ENCODE measurements at regions of chr14 and their contacts with region 1.

Region 1: DNA sequence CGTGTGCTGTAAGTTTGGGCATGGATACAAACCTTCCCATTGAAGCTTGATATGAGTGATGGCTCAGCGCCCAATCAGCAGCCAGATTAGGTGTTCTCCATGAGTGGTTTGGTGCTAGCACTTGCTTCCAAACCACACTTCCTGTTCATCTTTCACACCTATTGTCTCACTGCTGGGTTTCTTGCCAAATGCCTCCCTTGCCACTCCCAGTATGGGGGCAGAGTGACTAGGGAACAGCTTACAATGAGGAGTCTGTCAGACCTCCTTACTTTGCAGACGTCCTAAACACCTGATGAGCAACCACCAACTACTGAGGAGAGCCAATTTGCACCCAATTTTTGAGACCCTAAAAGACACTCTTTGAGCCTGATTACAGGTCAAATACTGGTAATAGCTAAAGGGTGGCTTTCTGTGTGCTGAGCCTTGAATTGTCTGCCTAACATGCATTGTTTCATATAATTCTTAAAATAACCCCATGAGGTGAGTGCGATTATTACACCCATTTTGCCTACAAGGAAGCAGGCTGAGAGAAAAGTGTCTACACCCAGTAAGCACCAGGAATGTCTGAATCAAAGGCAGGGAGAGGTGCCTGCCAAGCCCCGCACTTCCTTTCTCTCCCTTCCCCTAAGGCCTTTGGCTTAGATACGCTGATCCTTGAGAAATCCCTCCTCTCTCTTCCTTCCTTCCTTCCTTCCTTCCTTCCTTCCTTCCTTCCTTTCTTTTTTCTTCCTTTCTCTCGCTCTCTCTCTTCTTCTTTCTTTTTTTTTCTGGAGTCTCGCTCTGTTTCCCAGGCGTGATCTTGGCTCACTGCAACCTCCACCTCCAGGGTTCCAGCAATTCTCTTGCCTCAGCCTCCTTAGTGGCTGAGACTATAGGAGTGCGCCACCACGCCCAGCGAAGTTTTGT is 48.2 kb upstream of the FOS start:
- DNase-seq: peak; percentile 69
- H3K4me3 ChIP-seq: no peak overlapping the region
- H3K27ac ChIP-seq: peak overlapping the region; percentile 75 to 83 (median 79)
- H3K4me1 ChIP-seq: peaks cover 13 to 53% (median 18%) of the 10 kb centered on the region in 4 donors
- H3K27me3 ChIP-seq: no peaks in the 10 kb centered on the region
- CTCF ChIP-seq: peak; percentile 22 to 90 (median 41)
- EP300 ChIP-seq: no peak
- POLR2A ChIP-seq: peak; percentile 56

Region 2: GRCh38 chr14:75182841-75183624 is 47.4 kb before region 1 on chr14:
- in situ Hi-C with region 1: no loop called
- intact Hi-C with region 1: loop called (anchors 10 kb)
- DNase-seq: no peak
- H3K4me3 ChIP-seq: no peak overlapping the region
- H3K27ac ChIP-seq: peak overlapping the region; percentile 61 to 80 (median 69)
- H3K4me1 ChIP-seq: peaks cover 0 to 32% (median 13%) of the 10 kb centered on the region in 4 donors
- H3K27me3 ChIP-seq: no peaks in the 10 kb centered on the region
- CTCF ChIP-seq: no peak
- EP300 ChIP-seq: no peak
- POLR2A ChIP-seq: no peak

Region 3: DNA sequence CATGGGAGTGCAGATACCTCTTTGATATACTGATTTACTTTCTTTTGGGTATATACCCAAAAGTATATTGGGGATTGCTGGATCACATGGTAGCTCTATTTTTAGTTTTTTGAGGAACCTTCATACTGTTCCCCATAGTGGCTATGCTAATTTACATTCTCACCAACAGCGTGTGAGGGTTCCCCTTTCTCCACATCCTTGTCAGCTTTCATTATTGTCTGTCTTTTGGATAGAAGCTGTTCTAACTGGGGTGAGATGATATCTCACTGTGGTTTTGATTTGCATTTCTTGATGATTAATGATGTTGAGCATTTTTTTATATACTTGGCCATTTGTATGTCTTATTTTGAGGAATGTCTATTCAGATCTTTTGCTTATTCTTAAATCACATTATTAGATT is 153.3 kb after region 1 on chr14:
- in situ Hi-C with region 1: no loop called
- intact Hi-C with region 1: no loop called
- DNase-seq: no peak
- H3K4me3 ChIP-seq: no peak overlapping the region
- H3K27ac ChIP-seq: no peak overlapping the region
- H3K4me1 ChIP-seq: no peaks in the 10 kb centered on the region
- H3K27me3 ChIP-seq: no peaks in the 10 kb centered on the region
- CTCF ChIP-seq: no peak
- EP300 ChIP-seq: no peak
- POLR2A ChIP-seq: no peak

Measured in transverse colon (tissue), 4 donors.